ENCODE measurements at regions of chr5 and their contacts with region 1.

Region 1: GRCh38 chr5:62206150-62206829 is 99.7 kb upstream of the KIF2A start:
- ATAC-seq: peak in 3 of 8 experiments; percentile 89 to 97 (median 89)
- H3K4me3 ChIP-seq: no peak overlapping the region
- H3K27ac ChIP-seq: no peak overlapping the region
- H3K4me1 ChIP-seq: no peaks in the 10 kb centered on the region

Region 2: GRCh38 chr5:62354028-62354874 is 148.0 kb after region 1 on chr5:
- in situ Hi-C with region 1: loop called in 2 of 9 experiments (anchors 25 kb)
- ATAC-seq: peak in 4 of 8 experiments; percentile 48 to 76 (median 62)
- H3K4me3 ChIP-seq: no peak overlapping the region
- H3K27ac ChIP-seq: no peak overlapping the region
- H3K4me1 ChIP-seq: no peaks in the 10 kb centered on the region

Region 3: DNA sequence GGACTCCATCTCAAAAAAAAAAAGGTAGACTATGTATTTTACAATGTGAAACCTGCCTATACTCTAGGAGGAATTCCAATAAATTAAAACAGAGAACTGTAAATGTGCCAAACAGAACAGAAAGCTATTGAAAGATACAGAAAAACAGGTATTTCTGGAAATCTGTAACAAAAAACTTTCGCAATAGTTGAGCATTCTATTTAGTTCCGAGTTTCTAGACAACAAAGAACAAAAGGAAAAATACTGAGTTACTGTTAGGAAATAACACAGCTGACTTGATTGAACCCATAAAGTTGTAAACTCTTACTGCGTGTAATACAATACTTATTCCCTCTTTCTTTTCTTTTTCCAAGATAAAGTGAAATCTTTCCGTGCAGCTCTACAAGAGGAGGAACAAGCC is 178.8 kb after region 1 on chr5:
- in situ Hi-C with region 1: no loop called
- ATAC-seq: no peak
- H3K4me3 ChIP-seq: no peak overlapping the region
- H3K27ac ChIP-seq: no peak overlapping the region
- H3K4me1 ChIP-seq: no peaks in the 10 kb centered on the region

Region 4: DNA sequence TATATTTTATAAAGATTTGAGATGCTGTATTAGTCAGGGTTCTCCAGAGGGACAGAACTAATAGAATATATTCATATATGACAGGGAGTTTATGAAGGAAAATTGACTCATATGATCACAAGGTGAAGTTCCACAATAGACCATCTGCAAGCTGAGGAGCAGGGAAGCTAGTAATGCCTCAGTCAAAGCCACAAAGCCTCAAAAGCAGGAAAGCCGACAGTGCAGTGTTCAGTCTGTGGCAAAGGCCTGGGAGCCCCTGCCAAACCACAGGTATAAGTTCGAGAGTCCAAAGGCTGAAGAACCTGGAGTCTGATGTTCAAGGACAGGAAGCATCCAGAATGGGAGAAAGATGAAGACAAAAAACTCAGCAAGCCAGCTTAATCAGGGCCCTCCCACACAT is 754.5 kb after region 1 on chr5:
- in situ Hi-C with region 1: no loop called
- ATAC-seq: no peak
- H3K4me3 ChIP-seq: no peak overlapping the region
- H3K27ac ChIP-seq: no peak overlapping the region
- H3K4me1 ChIP-seq: no peaks in the 10 kb centered on the region

Measured in motor neuron (in vitro differentiated cells).